ENCODE measurements at regions of chr10 and their contacts with region 1.

Region 1: GRCh38 chr10:77718957-77719356 is 81.3 kb upstream of the KCNMA1 start:
- DNase-seq: no peak
- H3K4me3 ChIP-seq: no peak overlapping the region
- H3K27ac ChIP-seq: no peak overlapping the region
- H3K4me1 ChIP-seq: peaks cover 5% of the 10 kb centered on the region
- H3K27me3 ChIP-seq: no peaks in the 10 kb centered on the region
- CTCF ChIP-seq: no peak
- POLR2A ChIP-seq: no peak

Region 2: GRCh38 chr10:77756319-77757232 is 37.6 kb after region 1 on chr10:
- intact Hi-C with region 1: loop called (anchors 2 kb)
- DNase-seq: no peak
- H3K4me3 ChIP-seq: no peak overlapping the region
- H3K27ac ChIP-seq: no peak overlapping the region
- H3K4me1 ChIP-seq: no peaks in the 10 kb centered on the region
- H3K27me3 ChIP-seq: no peaks in the 10 kb centered on the region
- CTCF ChIP-seq: peak in 3 of 4 experiments; percentile 21 to 44 (median 39)
- POLR2A ChIP-seq: no peak

Region 3: GRCh38 chr10:77810446-77811335 is 91.7 kb after region 1 on chr10:
- intact Hi-C with region 1: no loop called
- DNase-seq: no peak
- H3K4me3 ChIP-seq: no peak overlapping the region
- H3K27ac ChIP-seq: no peak overlapping the region
- H3K4me1 ChIP-seq: no peaks in the 10 kb centered on the region
- H3K27me3 ChIP-seq: no peaks in the 10 kb centered on the region
- CTCF ChIP-seq: no peak
- POLR2A ChIP-seq: no peak

Measured in prostate gland (tissue), 2 donors.